ENCODE measurements at regions of chr16 and their contacts with region 1.

Region 1: DNA sequence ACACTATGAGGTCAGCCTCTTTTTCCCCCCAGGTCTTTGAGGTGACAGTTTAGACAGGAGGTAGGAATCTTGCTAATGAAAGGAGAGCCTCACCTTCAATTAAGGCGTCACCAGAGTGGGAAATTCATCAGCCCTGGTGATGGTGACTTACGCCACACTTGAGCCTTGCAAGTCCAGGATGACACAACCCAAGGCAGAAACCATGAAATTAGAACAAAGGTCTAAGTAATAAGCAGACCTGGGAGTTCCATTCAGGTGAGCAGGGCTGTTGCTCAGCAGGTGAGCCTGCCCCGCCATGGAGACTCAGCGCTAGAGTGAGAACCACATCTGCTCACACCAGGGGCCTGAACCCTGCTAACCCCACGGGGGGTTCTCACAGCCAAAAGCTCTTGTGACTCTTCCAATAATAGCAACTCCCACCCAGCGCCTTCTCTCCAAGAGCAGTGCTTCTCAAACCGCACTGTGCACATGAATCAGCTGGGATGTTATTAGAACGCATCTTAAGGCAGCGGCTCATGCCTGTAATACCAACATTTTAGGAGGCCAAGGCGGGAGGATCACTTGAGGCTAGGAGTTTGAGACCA is 28.7 kb upstream of the KIFC3 start:
- DNase-seq: no peak
- ATAC-seq: no peak
- H3K4me3 ChIP-seq: no peak overlapping the region
- H3K27ac ChIP-seq: no peak overlapping the region
- H3K4me1 ChIP-seq: peaks cover 24% of the 10 kb centered on the region
- H3K27me3 ChIP-seq: no peaks in the 10 kb centered on the region
- CTCF ChIP-seq: no peak

Region 2: DNA sequence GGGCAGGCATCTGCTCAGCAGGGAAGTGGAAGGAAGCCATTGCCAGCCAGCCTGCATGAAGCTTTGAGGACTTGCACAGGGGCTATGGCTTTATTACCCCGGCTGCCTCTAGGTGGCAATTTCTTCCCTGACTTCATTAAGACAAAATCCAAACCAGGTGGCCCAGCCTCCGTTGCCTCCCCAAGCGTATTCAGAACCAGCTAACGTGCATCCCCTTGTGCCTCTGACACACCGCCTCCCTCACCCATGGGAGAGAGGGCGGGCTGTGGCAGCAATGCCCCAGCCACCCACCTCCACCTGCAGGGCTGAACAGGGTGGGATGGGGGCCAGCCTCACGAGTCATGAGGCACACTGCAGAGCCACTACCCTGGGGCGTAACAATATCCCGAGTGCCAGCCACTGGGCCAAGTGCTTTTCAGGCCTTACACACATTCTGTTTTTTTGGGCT is 35.5 kb before region 1 on chr16:
- intact Hi-C with region 1: loop called in 1 of 2 experiments (anchors 2 kb)
- DNase-seq: peak in 1 of 2 donors; percentile 35
- ATAC-seq: peak; percentile 13 to 43 (median 29)
- H3K4me3 ChIP-seq: no peak overlapping the region
- H3K27ac ChIP-seq: no peak overlapping the region
- H3K4me1 ChIP-seq: peaks cover 49% of the 10 kb centered on the region
- H3K27me3 ChIP-seq: no peaks in the 10 kb centered on the region
- CTCF ChIP-seq: peak; percentile 40

Measured in psoas muscle (tissue), 8 donors.